Vagina (tissue), 2 donors: ENCODE measurements at regions of chr1 and their contacts with region 1.

Region 1: DNA sequence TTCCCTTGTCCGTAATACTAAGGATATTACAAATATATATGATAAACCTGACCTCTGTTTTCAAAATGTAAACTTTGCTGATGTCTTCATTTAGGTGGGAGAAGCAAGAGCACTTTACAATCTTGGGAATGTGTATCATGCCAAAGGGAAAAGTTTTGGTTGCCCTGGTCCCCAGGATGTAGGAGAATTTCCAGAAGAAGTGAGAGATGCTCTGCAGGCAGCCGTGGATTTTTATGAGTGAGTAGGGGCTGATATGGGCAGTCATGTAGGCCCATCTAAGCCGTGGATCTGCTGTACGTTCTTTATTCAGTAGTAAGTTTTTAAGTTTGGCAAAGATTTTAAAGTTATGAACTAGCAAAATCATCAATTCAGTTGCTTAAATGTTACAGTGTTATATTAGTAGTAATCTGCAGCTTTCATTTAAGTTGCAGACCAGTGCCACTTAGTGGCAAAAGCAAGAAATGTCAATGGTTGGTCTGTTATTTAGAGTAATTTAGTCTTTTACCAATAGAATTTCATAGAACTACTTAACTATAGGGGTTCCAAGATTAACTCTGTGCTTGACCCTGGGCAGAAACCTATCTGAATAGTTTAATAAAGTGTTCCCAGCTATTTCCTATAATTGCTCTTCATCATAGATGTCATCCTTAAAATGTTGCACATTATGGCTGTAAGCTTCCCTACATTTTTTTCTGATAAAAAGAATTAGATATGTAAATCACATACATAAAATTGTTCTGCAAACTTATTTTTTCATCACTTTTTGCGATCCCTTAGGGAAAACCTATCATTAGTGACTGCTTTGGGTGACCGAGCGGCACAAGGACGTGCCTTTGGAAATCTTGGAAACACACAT is 21.3 kb downstream of the GPSM2 start:
- DNase-seq: no peak
- H3K4me3 ChIP-seq: no peak overlapping the region
- H3K27ac ChIP-seq: no peak overlapping the region
- H3K4me1 ChIP-seq: peaks cover 27% of the 10 kb centered on the region
- H3K27me3 ChIP-seq: no peaks in the 10 kb centered on the region
- CTCF ChIP-seq: peak; percentile 43 to 74 (median 58)
- POLR2A ChIP-seq: no peak

Region 2: DNA sequence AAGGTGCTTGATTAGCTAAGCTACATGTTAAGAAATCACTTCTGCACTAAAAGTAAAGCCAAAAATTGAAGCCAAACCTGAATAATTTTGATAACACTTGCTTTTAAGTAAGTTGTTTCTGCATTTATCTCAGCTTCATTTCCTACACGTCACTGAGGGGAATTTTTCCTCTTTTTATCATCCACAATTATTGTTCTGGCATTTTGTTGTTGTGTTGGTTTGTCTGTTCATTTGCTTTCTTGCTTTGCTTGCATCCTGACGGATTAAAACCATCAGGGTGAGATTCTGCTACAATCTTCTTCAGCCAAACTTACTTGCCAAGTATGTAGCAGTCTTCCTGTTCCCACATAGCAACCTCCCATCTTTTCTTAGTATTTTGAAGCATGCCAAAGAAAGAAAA is 356.2 kb before region 1 on chr1:
- intact Hi-C with region 1: no loop called
- DNase-seq: no peak
- H3K4me3 ChIP-seq: no peak overlapping the region
- H3K27ac ChIP-seq: no peak overlapping the region
- H3K4me1 ChIP-seq: no peaks in the 10 kb centered on the region
- H3K27me3 ChIP-seq: no peaks in the 10 kb centered on the region
- CTCF ChIP-seq: no peak
- POLR2A ChIP-seq: no peak

Region 3: DNA sequence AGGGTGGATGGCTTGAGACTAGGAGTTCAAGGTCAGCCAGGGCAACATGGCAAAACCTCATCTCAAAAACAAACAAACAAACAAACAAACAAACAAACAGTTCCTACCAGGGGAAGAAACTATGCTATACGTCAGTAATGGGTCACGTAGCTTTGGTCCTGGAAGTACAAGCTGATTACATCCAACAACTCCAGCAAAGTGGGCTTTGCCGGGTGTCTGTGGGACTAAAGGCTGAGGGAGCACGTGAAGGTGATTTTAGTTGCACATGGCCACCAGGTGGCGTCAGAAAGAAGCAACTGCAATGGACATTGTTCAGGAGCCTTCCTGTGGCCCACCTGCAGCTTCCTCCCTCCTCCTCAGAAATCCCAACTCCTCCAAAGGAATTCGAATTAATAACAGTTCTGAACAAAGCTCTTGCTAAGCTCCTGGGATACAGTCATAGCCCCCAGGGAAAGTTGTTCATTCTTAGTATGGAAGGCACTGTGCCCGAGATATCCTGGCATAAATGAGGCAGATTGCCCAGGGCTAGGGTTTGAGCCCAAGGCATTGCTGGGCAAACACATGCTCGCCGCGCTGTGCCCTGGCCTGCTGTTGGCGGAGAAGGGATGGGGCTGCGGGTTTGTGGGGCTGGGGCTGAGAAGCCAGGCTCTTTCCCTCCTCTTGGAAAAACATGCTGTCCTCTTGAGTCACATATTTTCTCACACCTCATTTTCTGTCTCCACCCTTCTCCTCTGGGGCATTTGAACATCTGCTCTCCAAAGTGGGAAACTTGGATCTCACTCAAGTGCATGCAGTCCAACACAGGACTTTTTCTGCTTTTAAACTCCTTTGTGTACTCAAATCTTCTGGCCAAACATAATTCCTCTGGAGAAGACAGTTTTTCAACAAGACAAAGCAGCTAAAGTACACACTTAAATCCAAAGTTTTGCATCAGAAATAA is 69.8 kb before region 1 on chr1:
- intact Hi-C with region 1: loop called (anchors 5 kb)
- DNase-seq: no peak
- H3K4me3 ChIP-seq: no peak overlapping the region
- H3K27ac ChIP-seq: peak overlapping the region; percentile 92
- H3K4me1 ChIP-seq: peaks cover 48% of the 10 kb centered on the region
- H3K27me3 ChIP-seq: no peaks in the 10 kb centered on the region
- CTCF ChIP-seq: peak; percentile 55 to 77 (median 75)
- POLR2A ChIP-seq: no peak